HepG2 (cell line): ENCODE measurements at regions of chr15 and their contacts with region 1.

Region 1: DNA sequence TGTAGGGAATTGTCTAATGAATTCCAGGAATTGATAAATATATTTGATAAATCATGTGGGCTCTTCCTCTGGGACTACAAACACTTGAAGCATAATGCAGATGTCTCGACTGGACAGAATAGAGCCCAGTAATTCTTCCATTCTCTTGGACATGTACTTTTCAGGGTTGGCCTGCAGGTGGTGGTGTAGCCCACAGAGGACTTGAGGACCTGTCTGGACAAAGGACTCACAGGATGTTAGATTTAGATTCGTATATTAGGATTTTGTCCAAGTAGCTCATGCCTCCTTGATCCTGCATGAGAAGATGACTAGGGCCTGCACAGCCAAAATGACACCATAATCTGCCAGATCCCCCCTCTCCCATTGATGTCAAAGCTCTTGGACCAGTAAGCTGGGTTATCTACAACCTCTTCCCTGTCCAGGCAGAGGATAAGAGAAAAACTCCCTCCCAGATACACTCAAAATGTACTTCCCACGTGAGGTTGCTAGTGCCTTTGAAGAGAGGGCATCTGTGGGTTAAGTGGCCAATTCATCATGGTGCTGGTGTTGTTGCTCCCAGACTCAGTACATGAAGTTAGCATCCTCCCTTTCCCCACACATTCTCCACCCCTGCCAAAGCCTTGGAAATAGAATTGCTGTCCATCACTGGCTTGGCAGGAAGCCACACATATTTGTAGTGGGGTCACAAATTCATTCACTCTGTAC is 88.6 kb upstream of the ZNF280D start:
- DNase-seq: peak; percentile 43
- ATAC-seq: peak; percentile 93
- H3K4me3 ChIP-seq: no peak overlapping the region
- H3K27ac ChIP-seq: no peak overlapping the region
- H3K4me1 ChIP-seq: no peaks in the 10 kb centered on the region
- H3K27me3 ChIP-seq: no peaks in the 10 kb centered on the region
- CTCF ChIP-seq: peak; percentile 82
- EP300 ChIP-seq: no peak
- POLR2A ChIP-seq: no peak
- RAD21 ChIP-seq: peak; percentile 52; the same call in 1 of the 2 replicates

Region 2: DNA sequence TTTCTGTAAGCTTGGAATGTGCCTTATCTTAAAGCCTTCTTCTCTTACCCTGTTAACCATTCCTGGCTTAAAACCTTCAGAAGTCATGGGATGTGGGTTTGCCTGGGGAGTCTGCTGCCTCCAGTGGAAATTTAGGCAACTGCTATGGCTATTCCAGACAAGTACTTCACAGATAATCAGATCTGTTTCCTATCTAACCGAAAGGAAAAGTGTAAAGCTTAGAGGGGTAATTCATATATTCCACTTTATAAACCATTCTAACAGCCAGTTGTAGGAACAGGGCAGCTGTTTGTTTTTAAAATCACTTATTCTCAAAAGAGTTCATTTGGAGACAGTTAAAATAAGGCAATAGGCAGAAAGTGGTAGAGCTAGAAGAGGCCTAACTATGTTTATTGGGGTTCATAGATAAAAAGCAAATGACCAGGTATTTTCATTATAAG is 316.5 kb after region 1 on chr15:
- CTCF ChIA-PET with region 1: no interaction called
- POLR2A ChIA-PET with region 1: no interaction called
- in situ Hi-C with region 1: no loop called
- intact Hi-C with region 1: loop called (anchors 5 kb)
- DNase-seq: peak; percentile 34
- ATAC-seq: peak; percentile 94
- H3K4me3 ChIP-seq: no peak overlapping the region
- H3K27ac ChIP-seq: no peak overlapping the region
- H3K4me1 ChIP-seq: no peaks in the 10 kb centered on the region
- H3K27me3 ChIP-seq: no peaks in the 10 kb centered on the region
- CTCF ChIP-seq: peak; percentile 51
- EP300 ChIP-seq: no peak
- POLR2A ChIP-seq: no peak
- RAD21 ChIP-seq: 0 out of 2 replicates have a peak, but pooled peaks have one; percentile 24

Region 3: DNA sequence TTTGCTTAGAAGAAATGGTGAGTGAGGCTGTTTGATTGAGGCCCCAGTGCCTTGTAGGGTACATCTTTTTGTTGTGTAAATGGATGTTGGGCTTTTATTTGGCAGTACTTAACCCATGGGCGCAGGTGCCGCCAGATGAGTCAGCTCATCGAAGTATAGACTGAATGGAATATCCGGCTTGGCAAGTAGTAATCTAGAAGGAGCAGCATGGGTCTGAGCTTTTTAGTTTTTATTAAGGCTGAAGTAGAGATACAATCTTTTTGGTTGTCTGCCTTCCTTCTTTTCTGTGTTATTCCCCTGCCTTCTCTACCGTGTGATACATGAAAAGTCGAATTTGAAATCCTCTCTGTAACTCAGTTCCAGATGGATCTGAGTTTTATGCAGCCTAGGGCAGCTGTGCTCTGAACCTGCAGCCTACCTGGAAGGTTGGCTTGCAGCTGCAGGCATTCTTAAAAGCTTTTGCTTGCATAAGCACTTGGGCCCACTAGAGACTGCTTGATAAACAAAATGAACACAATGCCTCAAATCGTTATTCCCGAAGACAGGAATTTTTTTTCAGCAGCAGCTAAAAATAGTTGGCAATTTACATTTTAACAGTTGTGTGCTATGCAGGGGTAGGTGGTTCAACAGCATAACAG is 376.9 kb after region 1 on chr15:
- CTCF ChIA-PET with region 1: no interaction called
- POLR2A ChIA-PET with region 1: no interaction called
- in situ Hi-C with region 1: no loop called
- intact Hi-C with region 1: loop called (anchors 1 kb)
- DNase-seq: no peak
- ATAC-seq: no peak
- H3K4me3 ChIP-seq: no peak overlapping the region
- H3K27ac ChIP-seq: no peak overlapping the region
- H3K4me1 ChIP-seq: peaks cover 13% of the 10 kb centered on the region
- H3K27me3 ChIP-seq: no peaks in the 10 kb centered on the region
- CTCF ChIP-seq: no peak
- EP300 ChIP-seq: no peak
- POLR2A ChIP-seq: no peak
- RAD21 ChIP-seq: no peak